ENCODE measurements at regions of chr1 and their contacts with region 1.

Region 1: GRCh38 chr1:187744665-187745064 is 915.9 kb downstream of the PLA2G4A start:
- DNase-seq: no peak
- H3K4me3 ChIP-seq: no peak overlapping the region
- H3K27ac ChIP-seq: no peak overlapping the region
- H3K27me3 ChIP-seq: no peaks in the 10 kb centered on the region
- CTCF ChIP-seq: no peak

Region 2: GRCh38 chr1:187755536-187755935 is 10.9 kb after region 1 on chr1:
- intact Hi-C with region 1: loop called in 1 of 2 experiments (anchors 1 kb)
- DNase-seq: no peak
- H3K4me3 ChIP-seq: no peak overlapping the region
- H3K27ac ChIP-seq: no peak overlapping the region
- H3K27me3 ChIP-seq: no peaks in the 10 kb centered on the region
- CTCF ChIP-seq: no peak

Region 3: GRCh38 chr1:187854457-187854856 is 109.8 kb after region 1 on chr1:
- intact Hi-C with region 1: no loop called
- DNase-seq: no peak
- H3K4me3 ChIP-seq: no peak overlapping the region
- H3K27ac ChIP-seq: no peak overlapping the region
- H3K27me3 ChIP-seq: no peaks in the 10 kb centered on the region
- CTCF ChIP-seq: no peak

Measured in dorsolateral prefrontal cortex (tissue), 120 donors.